CD4-positive, alpha-beta memory T cell (primary cell): ENCODE measurements at regions of chr11 and their contacts with region 1.

Region 1: GRCh38 chr11:6705905-6706535 is 22.9 kb upstream of the MRPL17 start:
- DNase-seq: peak; percentile 38 to 52 (median 46)
- H3K4me3 ChIP-seq: no peak overlapping the region
- H3K4me3 Mint-ChIP-seq: no peak overlapping the region
- H3K27ac ChIP-seq: no peak overlapping the region
- H3K27ac Mint-ChIP-seq: peak overlapping the region; percentile 4 to 84 (median 43)
- H3K4me1 ChIP-seq: no peaks in the 10 kb centered on the region
- H3K4me1 Mint-ChIP-seq: peaks cover 9 to 25% (median 18%) of the 10 kb centered on the region in 4 donors
- H3K27me3 ChIP-seq: no peaks in the 10 kb centered on the region
- H3K27me3 Mint-ChIP-seq: no peaks in the 10 kb centered on the region

Region 2: GRCh38 chr11:6627762-6628241 is 78.2 kb before region 1 on chr11:
- CTCF ChIA-PET with region 1: no interaction called
- POLR2A ChIA-PET with region 1: no interaction called
- intact Hi-C with region 1: no loop called
- DNase-seq: peak in 3 of 5 donors; percentile 25 to 33 (median 26)
- H3K4me3 ChIP-seq: no peak overlapping the region
- H3K4me3 Mint-ChIP-seq: peak overlapping the region; percentile 10 to 75 (median 52)
- H3K27ac ChIP-seq: peak overlapping the region; percentile 3
- H3K27ac Mint-ChIP-seq: peak overlapping the region; percentile 18 to 95 (median 48)
- H3K4me1 ChIP-seq: peaks cover 15% of the 10 kb centered on the region
- H3K4me1 Mint-ChIP-seq: peaks cover 8 to 19% (median 13%) of the 10 kb centered on the region in 4 donors
- H3K27me3 ChIP-seq: no peaks in the 10 kb centered on the region
- H3K27me3 Mint-ChIP-seq: no peaks in the 10 kb centered on the region

Region 3: GRCh38 chr11:6693342-6694228 is 12.4 kb before region 1 on chr11:
- CTCF ChIA-PET with region 1: interaction called, 7 read pairs
- POLR2A ChIA-PET with region 1: interaction called, 6 read pairs
- intact Hi-C with region 1: loop called (anchors 2 kb)
- DNase-seq: peak in 3 of 5 donors; percentile 48 to 78 (median 57)
- H3K4me3 ChIP-seq: no peak overlapping the region
- H3K4me3 Mint-ChIP-seq: peak overlapping the region in 3 of 8 donors; percentile 15 to 69 (median 35)
- H3K27ac ChIP-seq: no peak overlapping the region
- H3K27ac Mint-ChIP-seq: peak overlapping the region; percentile 39 to 89 (median 63)
- H3K4me1 ChIP-seq: peaks cover 25% of the 10 kb centered on the region
- H3K4me1 Mint-ChIP-seq: peaks cover 20 to 44% (median 23%) of the 10 kb centered on the region in 4 donors
- H3K27me3 ChIP-seq: no peaks in the 10 kb centered on the region
- H3K27me3 Mint-ChIP-seq: no peaks in the 10 kb centered on the region

Region 4: GRCh38 chr11:6719576-6719975 is 13.6 kb after region 1 on chr11:
- CTCF ChIA-PET with region 1: interaction called, 19 read pairs
- POLR2A ChIA-PET with region 1: interaction called, 3 read pairs
- intact Hi-C with region 1: no loop called
- DNase-seq: no peak
- H3K4me3 ChIP-seq: no peak overlapping the region
- H3K4me3 Mint-ChIP-seq: peak overlapping the region in 2 of 8 donors; percentile 27 to 31
- H3K27ac ChIP-seq: no peak overlapping the region
- H3K27ac Mint-ChIP-seq: peak overlapping the region; percentile 0 to 86 (median 59)
- H3K4me1 ChIP-seq: peaks cover 75% of the 10 kb centered on the region
- H3K4me1 Mint-ChIP-seq: peaks cover 56 to 91% (median 77%) of the 10 kb centered on the region in 4 donors
- H3K27me3 ChIP-seq: no peaks in the 10 kb centered on the region
- H3K27me3 Mint-ChIP-seq: no peaks in the 10 kb centered on the region

Region 5: DNA sequence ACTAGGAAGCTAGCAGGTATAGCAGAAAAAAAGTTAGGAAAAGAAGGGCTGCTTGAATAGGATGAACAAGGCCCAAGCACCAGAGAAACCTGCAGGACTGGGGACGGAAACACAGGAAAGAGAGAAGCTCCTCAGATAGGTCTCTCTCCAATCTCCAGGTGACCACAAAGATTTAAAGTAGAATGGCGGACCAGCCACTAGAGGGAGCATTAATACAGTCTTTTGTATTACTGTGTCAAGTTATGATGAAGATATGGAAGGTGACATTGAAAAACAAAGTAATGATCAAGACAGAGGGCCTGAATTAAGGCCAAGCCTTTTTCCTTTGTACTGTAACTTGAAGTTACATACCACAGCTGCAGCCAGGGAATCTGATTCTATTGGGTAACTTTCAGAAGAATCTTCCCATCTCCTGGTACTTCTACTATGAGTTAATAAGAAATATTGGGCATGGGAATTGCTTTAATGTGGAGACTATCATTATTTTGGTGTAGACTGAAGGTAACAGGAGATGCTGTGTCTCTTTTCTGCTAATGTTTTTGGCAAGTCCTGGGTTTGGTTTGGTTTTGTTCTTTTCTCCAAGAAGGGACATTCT is 31.9 kb after region 1 on chr11:
- CTCF ChIA-PET with region 1: interaction called, 51 read pairs
- POLR2A ChIA-PET with region 1: interaction called, 7 read pairs
- intact Hi-C with region 1: loop called (anchors 1 kb)
- DNase-seq: peak; percentile 73 to 82 (median 75)
- H3K4me3 ChIP-seq: no peak overlapping the region
- H3K4me3 Mint-ChIP-seq: peak overlapping the region; percentile 23 to 77 (median 38)
- H3K27ac ChIP-seq: peak overlapping the region; percentile 38
- H3K27ac Mint-ChIP-seq: peak overlapping the region; percentile 60 to 89 (median 75)
- H3K4me1 ChIP-seq: peaks cover 88% of the 10 kb centered on the region
- H3K4me1 Mint-ChIP-seq: peaks cover 75 to 91% (median 83%) of the 10 kb centered on the region in 4 donors
- H3K27me3 ChIP-seq: no peaks in the 10 kb centered on the region
- H3K27me3 Mint-ChIP-seq: no peaks in the 10 kb centered on the region

Region 6: DNA sequence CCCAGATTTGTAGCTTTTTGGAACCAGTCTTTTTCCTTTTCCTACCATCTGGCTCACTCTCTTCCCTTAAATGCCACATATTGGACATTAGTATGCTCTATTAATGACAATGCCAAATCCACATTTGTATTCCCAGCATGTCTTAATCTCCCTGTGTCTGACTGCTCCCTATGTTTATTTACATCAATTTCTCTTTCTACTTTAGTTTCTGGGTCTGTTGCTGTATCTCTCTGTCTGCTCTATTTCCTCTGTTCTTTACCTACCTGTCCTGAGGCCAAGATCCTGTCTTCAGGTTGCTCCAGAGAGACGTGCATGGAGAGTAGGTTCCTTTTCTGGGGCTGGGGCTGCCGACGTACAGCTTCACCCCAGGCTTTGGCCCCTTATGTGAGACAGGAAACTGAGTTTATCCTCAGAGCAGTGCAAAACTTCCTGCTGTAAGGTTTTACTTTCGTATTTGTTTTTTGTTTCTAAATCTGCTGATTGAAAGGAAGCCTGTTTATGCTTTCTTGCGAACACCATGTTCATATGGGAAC is 40.1 kb after region 1 on chr11:
- CTCF ChIA-PET with region 1: interaction called, 80 read pairs
- POLR2A ChIA-PET with region 1: interaction called, 4 read pairs
- intact Hi-C with region 1: no loop called
- DNase-seq: peak; percentile 56 to 64 (median 61)
- H3K4me3 ChIP-seq: peak overlapping the region; percentile 60 to 75
- H3K4me3 Mint-ChIP-seq: no peak overlapping the region
- H3K27ac ChIP-seq: peak overlapping the region; percentile 79
- H3K27ac Mint-ChIP-seq: no peak overlapping the region
- H3K4me1 ChIP-seq: peaks cover 49% of the 10 kb centered on the region
- H3K4me1 Mint-ChIP-seq: peaks cover 31 to 39% (median 34%) of the 10 kb centered on the region in 4 donors
- H3K27me3 ChIP-seq: no peaks in the 10 kb centered on the region
- H3K27me3 Mint-ChIP-seq: no peaks in the 10 kb centered on the region